PC-9 (cell line): ENCODE measurements at regions of chr16 and their contacts with region 1.

Region 1: GRCh38 chr16:55471448-55472097 is 7.4 kb upstream of the MMP2 start:
- DNase-seq: peak; percentile 41 to 92
- H3K4me3 ChIP-seq: peak overlapping the region; percentile 22; the same call in 1 of the 2 replicates
- H3K27ac ChIP-seq: peak overlapping the region; percentile 95
- H3K4me1 ChIP-seq: peaks cover 45% of the 10 kb centered on the region
- H3K27me3 ChIP-seq: no peaks in the 10 kb centered on the region
- CTCF ChIP-seq: no peak

Region 2: GRCh38 chr16:55487048-55487803 is 15.7 kb after region 1 on chr16:
- CTCF ChIA-PET with region 1: no interaction called
- POLR2A ChIA-PET with region 1: no interaction called
- intact Hi-C with region 1: no loop called
- DNase-seq: no peak
- H3K4me3 ChIP-seq: no peak overlapping the region
- H3K27ac ChIP-seq: no peak overlapping the region
- H3K4me1 ChIP-seq: peaks cover 1% of the 10 kb centered on the region; the same call in 1 of the 2 replicates
- H3K27me3 ChIP-seq: no peaks in the 10 kb centered on the region
- CTCF ChIP-seq: no peak

Region 3: GRCh38 chr16:55502801-55503366 is 31.3 kb after region 1 on chr16:
- CTCF ChIA-PET with region 1: interaction called, 18 read pairs
- POLR2A ChIA-PET with region 1: interaction called, 21 read pairs
- intact Hi-C with region 1: loop called (anchors 1 kb)
- DNase-seq: peak; percentile 78 to 87
- H3K4me3 ChIP-seq: no peak overlapping the region
- H3K27ac ChIP-seq: peak overlapping the region; percentile 69
- H3K4me1 ChIP-seq: peaks cover 58% of the 10 kb centered on the region
- H3K27me3 ChIP-seq: no peaks in the 10 kb centered on the region
- CTCF ChIP-seq: no peak

Region 4: DNA sequence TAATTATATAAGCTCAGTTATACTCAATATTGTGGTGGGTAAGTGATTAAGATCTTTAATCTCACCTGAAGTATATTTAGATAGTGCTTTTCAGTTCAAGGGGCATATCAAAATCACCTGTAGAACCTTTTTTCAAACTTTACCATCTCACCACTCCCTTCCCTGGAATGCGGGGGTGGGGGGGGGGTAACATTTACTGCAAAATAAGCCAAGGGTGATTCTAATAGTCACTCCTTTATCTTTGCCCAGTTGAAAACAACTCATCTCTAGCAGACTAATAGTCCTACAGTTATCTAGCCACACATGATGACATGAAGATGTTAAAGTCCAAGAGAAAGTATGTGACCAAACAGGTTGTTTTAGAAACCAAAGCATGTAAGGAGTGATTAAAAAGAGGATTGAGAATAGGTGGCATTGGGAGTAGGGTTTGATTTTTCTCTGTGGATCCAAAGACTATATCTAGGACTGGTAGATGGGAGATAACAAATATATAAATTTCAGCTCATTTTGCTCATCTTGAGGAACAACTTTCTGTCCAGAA is 58.8 kb after region 1 on chr16:
- CTCF ChIA-PET with region 1: interaction called, 4 read pairs
- POLR2A ChIA-PET with region 1: no interaction called
- intact Hi-C with region 1: loop called (anchors 2 kb)
- DNase-seq: peak in 1 of 2 experiments; percentile 52
- H3K4me3 ChIP-seq: no peak overlapping the region
- H3K27ac ChIP-seq: no peak overlapping the region
- H3K4me1 ChIP-seq: peaks cover 14% of the 10 kb centered on the region
- H3K27me3 ChIP-seq: no peaks in the 10 kb centered on the region
- CTCF ChIP-seq: no peak

Region 5: DNA sequence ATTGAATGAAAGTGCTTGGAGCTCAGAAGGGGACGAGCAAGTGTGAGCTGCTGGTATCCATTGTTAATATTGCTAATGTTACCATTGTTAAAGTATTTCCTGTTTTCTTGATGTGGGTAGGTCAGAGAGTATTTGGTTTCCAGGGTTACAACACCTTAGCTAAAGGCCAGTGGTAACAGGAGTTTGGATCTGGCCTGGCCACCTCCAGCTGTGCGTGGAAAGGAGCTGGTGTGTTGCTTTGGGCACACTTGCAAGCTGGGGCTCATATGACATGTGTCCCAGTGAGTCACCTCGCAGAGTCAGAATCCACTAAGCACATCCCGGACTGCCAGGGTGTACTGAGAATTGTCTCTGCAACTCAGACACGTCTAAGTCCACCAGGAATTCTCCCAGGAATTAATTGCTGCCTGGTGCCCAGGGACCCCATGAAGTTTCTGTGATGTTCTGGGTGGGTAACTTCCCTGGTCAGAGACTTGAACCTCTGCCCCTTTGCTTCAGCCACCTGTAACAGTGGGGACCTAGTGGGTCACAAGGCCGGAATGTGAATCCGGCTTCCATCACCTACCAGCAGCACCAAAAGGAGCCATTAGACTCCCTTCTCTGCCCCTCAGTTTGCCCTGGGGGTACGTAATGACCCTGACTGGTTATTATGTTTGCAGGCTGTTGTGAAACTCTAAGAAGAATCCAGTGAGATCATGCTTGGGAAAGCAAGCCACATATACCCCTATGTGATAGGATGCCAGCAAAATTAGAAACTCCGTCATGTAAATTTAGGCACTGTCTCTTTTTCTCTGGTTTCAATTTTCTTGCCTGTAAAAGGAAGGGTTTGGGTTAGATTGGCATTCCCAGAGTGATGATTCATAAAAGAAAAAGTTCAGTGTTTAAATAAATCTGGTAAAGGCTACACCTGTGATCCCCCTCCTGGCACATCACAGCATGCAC is 197.0 kb after region 1 on chr16:
- CTCF ChIA-PET with region 1: no interaction called
- POLR2A ChIA-PET with region 1: no interaction called
- intact Hi-C with region 1: loop called (anchors 1 kb)
- DNase-seq: peak; percentile 86 to 99
- H3K4me3 ChIP-seq: peak overlapping the region; percentile 45; the same call in 1 of the 2 replicates
- H3K27ac ChIP-seq: peak overlapping the region; percentile 99
- H3K4me1 ChIP-seq: peaks cover 76% of the 10 kb centered on the region
- H3K27me3 ChIP-seq: no peaks in the 10 kb centered on the region
- CTCF ChIP-seq: no peak

Region 6: DNA sequence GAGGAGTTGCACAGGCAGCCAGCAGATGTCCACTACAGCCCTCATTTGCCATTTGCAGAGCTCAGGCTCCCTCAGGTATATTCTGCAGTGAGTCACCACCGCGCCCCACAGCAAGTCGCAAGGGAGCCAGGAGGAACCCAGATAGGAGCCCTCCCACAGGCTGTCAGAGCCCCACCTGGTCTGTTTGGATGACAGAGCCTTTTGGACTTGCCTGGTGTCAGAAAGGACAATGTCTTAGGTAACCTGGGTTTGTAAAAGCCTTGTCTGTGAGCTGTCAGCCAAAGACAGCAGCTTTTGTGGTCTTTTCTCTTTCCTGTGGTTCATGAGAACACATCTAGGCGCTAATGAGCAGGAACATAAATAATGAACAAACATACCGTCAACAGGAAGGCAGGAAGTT is 790.6 kb after region 1 on chr16:
- CTCF ChIA-PET with region 1: no interaction called
- POLR2A ChIA-PET with region 1: interaction called, 10 read pairs
- intact Hi-C with region 1: no loop called
- DNase-seq: peak; percentile 76 to 81
- H3K4me3 ChIP-seq: no peak overlapping the region
- H3K27ac ChIP-seq: no peak overlapping the region
- H3K4me1 ChIP-seq: peaks cover 26% of the 10 kb centered on the region
- H3K27me3 ChIP-seq: no peaks in the 10 kb centered on the region
- CTCF ChIP-seq: no peak

Region 7: GRCh38 chr16:56608043-56608875 is 1136.7 kb after region 1 on chr16 and contains the start of gene MT2A:
- CTCF ChIA-PET with region 1: no interaction called
- POLR2A ChIA-PET with region 1: interaction called, 3 read pairs
- intact Hi-C with region 1: loop called (anchors 5 kb)
- DNase-seq: peak; percentile 89 to 91
- H3K4me3 ChIP-seq: peak within 1 kb of the TSS; percentile 90
- H3K27ac ChIP-seq: peak within 1 kb of the TSS; percentile 95
- H3K4me1 ChIP-seq: peaks cover 88% of the 10 kb centered on the region
- H3K27me3 ChIP-seq: no peaks in the 10 kb centered on the region
- CTCF ChIP-seq: no peak
- total RNA-seq, gene MT2A: 203 and 353 TPM in 2 replicates